Transverse colon (tissue), 4 donors: ENCODE measurements at regions of chr11 and their contacts with region 1.

Region 1: GRCh38 chr11:7986768-7987559 is at the start of gene EIF3F:
- DNase-seq: peak; percentile 92
- H3K4me3 ChIP-seq: peak within 1 kb of the TSS; percentile 79 to 97 (median 92)
- H3K27ac ChIP-seq: peak within 1 kb of the TSS; percentile 79 to 90 (median 85)
- H3K4me1 ChIP-seq: peaks cover 16 to 37% (median 20%) of the 10 kb centered on the region in 4 donors
- H3K27me3 ChIP-seq: no peaks in the 10 kb centered on the region
- CTCF ChIP-seq: peak; percentile 83 to 96 (median 87)
- EP300 ChIP-seq: no peak
- POLR2A ChIP-seq: peak; percentile 45
- total RNA-seq, gene EIF3F: 103 to 873 (median 206) TPM

Region 2: GRCh38 chr11:7892840-7893254 is 94.1 kb before region 1 on chr11:
- in situ Hi-C with region 1: loop called in 3 of 4 experiments (anchors 5 to 10 kb)
- intact Hi-C with region 1: loop called (anchors 5 kb)
- DNase-seq: no peak
- H3K4me3 ChIP-seq: no peak overlapping the region
- H3K27ac ChIP-seq: peak overlapping the region; percentile 70 to 77 (median 72)
- H3K4me1 ChIP-seq: peaks cover 5 to 20% (median 7%) of the 10 kb centered on the region in 4 donors
- H3K27me3 ChIP-seq: peaks cover 16% of the 10 kb centered on the region
- CTCF ChIP-seq: peak; percentile 65 to 80 (median 71)
- EP300 ChIP-seq: no peak
- POLR2A ChIP-seq: no peak

Region 3: DNA sequence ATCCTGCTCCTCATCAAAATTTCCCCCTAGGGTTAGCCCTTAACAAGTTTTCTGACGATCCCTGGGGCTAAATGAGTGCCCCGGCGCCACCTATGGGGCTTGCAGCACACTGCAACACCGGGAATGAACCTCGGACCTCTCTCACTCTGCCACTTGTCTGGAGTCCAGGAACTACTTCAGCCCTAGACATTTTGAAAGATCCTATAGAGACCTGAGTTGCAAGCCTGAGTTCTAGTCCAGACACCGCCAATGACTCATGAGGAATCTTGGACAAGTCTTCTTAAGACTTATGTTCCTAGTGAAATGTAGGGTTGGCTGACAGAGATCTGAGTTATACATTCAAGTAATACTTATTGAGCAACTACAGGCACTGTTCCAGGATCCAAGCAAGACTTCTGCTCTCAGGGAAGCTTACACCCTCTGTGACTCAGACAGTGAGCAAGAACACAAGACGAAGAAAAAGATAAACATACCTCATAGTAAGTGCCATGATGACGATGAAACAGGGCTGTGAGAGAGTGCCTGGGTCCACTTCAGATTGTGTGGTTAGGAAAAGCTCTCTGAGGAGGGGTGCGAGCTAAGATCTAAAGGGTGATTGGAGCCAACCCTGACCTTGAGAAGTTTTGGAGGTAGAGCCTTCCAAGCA is 617.2 kb after region 1 on chr11:
- in situ Hi-C with region 1: no loop called
- intact Hi-C with region 1: no loop called
- DNase-seq: peak; percentile 67
- H3K4me3 ChIP-seq: no peak overlapping the region
- H3K27ac ChIP-seq: peak overlapping the region; percentile 51 to 68 (median 56)
- H3K4me1 ChIP-seq: peaks cover 0 to 6% (median 0%) of the 10 kb centered on the region in 4 donors
- H3K27me3 ChIP-seq: no peaks in the 10 kb centered on the region
- CTCF ChIP-seq: peak; percentile 50 to 68 (median 66)
- EP300 ChIP-seq: no peak
- POLR2A ChIP-seq: no peak